ENCODE measurements at regions of chr16 and their contacts with region 1.

Region 1: DNA sequence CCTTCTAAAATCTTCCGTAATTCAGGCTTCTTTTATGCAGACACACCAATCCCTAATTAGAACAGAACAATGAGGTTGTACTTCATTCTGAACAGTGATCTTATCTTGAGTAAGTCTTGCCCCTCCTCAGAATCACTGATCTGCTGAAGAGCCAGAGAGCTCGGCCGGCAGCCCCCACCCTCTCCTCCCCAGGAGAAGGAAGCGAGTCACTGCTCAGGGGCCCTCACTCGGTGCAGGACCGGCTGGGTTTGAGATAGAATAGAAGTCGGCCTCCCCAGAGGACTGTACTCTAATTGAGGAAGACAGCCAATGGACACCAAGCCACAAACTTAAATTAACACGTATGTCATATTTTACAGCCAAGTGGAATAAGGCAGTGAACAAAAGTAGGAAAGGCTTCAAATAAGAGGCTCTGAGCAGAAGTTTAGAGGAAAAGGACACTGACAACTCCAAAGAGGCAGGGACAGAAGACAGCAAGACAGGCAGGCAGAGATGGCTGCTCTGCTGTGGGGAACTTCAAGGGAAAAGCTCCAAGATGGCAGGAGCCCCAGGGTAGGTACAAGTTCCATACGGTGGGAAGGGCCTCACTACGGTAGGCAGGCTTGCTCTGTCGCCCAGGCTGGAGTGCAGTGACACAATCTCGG is 18.6 kb downstream of the CREBBP start:
- DNase-seq: no peak

Region 2: GRCh38 chr16:3780570-3780969 is 81.4 kb before region 1 on chr16:
- intact Hi-C with region 1: loop called (anchors 5 kb)
- DNase-seq: no peak

Region 3: GRCh38 chr16:3819746-3820724 is 41.9 kb before region 1 on chr16:
- intact Hi-C with region 1: loop called (anchors 10 kb)
- DNase-seq: no peak

Measured in cardiac septum (tissue), 1 donor.